HEK293 (cell line): ENCODE measurements at regions of chr14 and their contacts with region 1.

Region 1: GRCh38 chr14:73026845-73027542 is at the start of gene ZFYVE1:
- H3K4me3 ChIP-seq: peak within 1 kb of the TSS; percentile 73
- H3K27ac ChIP-seq: peak within 1 kb of the TSS; percentile 53; the same call in 1 of the 2 replicates
- H3K4me1 ChIP-seq: peaks cover 4% of the 10 kb centered on the region; the same call in 1 of the 2 replicates
- CTCF ChIP-seq: no peak

Region 2: DNA sequence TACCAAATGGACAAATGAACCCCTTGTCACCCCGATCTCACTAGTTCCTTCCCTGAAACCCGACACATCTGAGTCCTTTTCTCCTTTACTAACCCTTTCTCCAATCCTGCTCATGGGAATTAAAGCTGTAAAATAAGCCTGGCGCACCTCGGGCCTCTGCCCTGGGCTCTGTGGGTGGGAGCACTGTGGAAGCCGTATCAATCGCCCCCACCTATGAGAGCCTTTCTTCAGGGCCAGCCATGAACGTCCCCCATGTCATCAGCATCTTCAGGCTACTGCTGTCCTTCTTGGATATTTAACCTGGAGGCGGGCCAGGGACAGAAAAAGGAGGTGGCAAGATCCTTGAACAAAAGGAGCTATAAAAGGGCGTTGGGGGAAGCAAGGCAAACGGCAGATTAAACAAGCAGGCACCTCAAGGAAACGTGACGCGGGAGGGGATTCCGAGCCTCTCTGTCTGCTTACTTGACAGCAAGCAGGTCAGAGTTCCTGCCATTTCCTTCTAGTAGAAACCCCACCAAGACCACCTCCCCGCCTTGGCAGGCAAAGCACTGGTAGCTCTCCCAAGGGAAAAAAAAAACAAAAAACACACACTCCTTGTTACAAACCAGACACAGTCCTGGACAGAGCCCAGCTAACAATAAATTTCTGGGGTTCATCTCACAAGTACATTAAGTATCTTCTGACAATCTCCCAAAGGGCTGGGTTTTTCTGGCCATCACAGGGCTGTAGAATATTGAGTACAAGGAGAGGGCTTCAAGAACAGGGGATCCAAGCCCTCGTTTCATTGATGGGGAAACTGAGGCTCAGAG is 196.0 kb before region 1 on chr14:
- CTCF ChIA-PET with region 1: no interaction called
- POLR2A ChIA-PET with region 1: no interaction called
- H3K4me3 ChIP-seq: no peak overlapping the region
- H3K27ac ChIP-seq: no peak overlapping the region
- H3K4me1 ChIP-seq: peaks cover 4% of the 10 kb centered on the region
- CTCF ChIP-seq: no peak

Region 3: GRCh38 chr14:73058224-73058921 is 31.4 kb after region 1 on chr14 and contains the start of gene RBM25:
- CTCF ChIA-PET with region 1: interaction called, 5 read pairs
- POLR2A ChIA-PET with region 1: interaction called, 51 read pairs
- H3K4me3 ChIP-seq: peak within 1 kb of the TSS; percentile 98
- H3K27ac ChIP-seq: peak within 1 kb of the TSS; percentile 91
- H3K4me1 ChIP-seq: peaks cover 9% of the 10 kb centered on the region
- CTCF ChIP-seq: no peak